ENCODE measurements at regions of chr12 and their contacts with region 1.

Region 1: GRCh38 chr12:39592295-39592694 is 27.3 kb downstream of the ABCD2 start:
- DNase-seq: no peak
- ATAC-seq: no peak
- H3K4me3 ChIP-seq: no peak overlapping the region
- H3K4me3 Mint-ChIP-seq: no peak overlapping the region
- H3K27ac ChIP-seq: no peak overlapping the region
- H3K27ac Mint-ChIP-seq: peak overlapping the region in 6 of 9 donors; percentile 3 to 36 (median 23)
- H3K4me1 ChIP-seq: no peaks in the 10 kb centered on the region
- H3K4me1 Mint-ChIP-seq: peaks cover under 1 to 29% (median 10%) of the 10 kb centered on the region in 7 donors
- H3K27me3 ChIP-seq: no peaks in the 10 kb centered on the region
- H3K27me3 Mint-ChIP-seq: no peaks in the 10 kb centered on the region

Region 2: GRCh38 chr12:39610436-39611025 is 18.2 kb after region 1 on chr12:
- CTCF ChIA-PET with region 1: interaction called, 4 read pairs
- POLR2A ChIA-PET with region 1: interaction called, 3 read pairs
- intact Hi-C with region 1: loop called in 1 of 2 experiments (anchors 2 kb)
- DNase-seq: no peak
- ATAC-seq: no peak
- H3K4me3 ChIP-seq: no peak overlapping the region
- H3K4me3 Mint-ChIP-seq: peak overlapping the region in 1 of 10 donors; percentile 11
- H3K27ac ChIP-seq: no peak overlapping the region
- H3K27ac Mint-ChIP-seq: peak overlapping the region in 7 of 9 donors; percentile 0 to 70 (median 33)
- H3K4me1 ChIP-seq: peaks cover 7 to 9% of the 10 kb centered on the region in 2 donors
- H3K4me1 Mint-ChIP-seq: peaks cover 16 to 77% (median 68%) of the 10 kb centered on the region in 7 donors
- H3K27me3 ChIP-seq: no peaks in the 10 kb centered on the region
- H3K27me3 Mint-ChIP-seq: no peaks in the 10 kb centered on the region

Measured in naive thymus-derived CD4-positive, alpha-beta T cell (primary cell).